Heart right ventricle (tissue), 16 donors: ENCODE measurements at regions of chr7 and their contacts with region 1.

Region 1: GRCh38 chr7:79182283-79182682 is 271.2 kb downstream of the MAGI2 start:
- DNase-seq: no peak
- ATAC-seq: no peak
- H3K4me3 ChIP-seq: no peak overlapping the region
- H3K27ac ChIP-seq: no peak overlapping the region
- H3K4me1 ChIP-seq: no peaks in the 10 kb centered on the region
- H3K27me3 ChIP-seq: no peaks in the 10 kb centered on the region
- CTCF ChIP-seq: no peak

Region 2: GRCh38 chr7:79211724-79212123 is 29.4 kb after region 1 on chr7:
- intact Hi-C with region 1: loop called in 1 of 10 experiments (anchors 1 kb)
- DNase-seq: no peak
- ATAC-seq: no peak
- H3K4me3 ChIP-seq: no peak overlapping the region
- H3K27ac ChIP-seq: no peak overlapping the region
- H3K4me1 ChIP-seq: peaks cover 0 to 3% (median 0%) of the 10 kb centered on the region in 9 donors
- H3K27me3 ChIP-seq: no peaks in the 10 kb centered on the region
- CTCF ChIP-seq: no peak

Region 3: GRCh38 chr7:79317728-79318127 is 135.4 kb after region 1 on chr7:
- intact Hi-C with region 1: no loop called
- DNase-seq: no peak
- ATAC-seq: no peak
- H3K4me3 ChIP-seq: no peak overlapping the region
- H3K27ac ChIP-seq: no peak overlapping the region
- H3K4me1 ChIP-seq: peaks cover 0 to 5% (median 0%) of the 10 kb centered on the region in 9 donors
- H3K27me3 ChIP-seq: no peaks in the 10 kb centered on the region
- CTCF ChIP-seq: no peak